Activated T-helper 1 cell treated with anti-CD3 and anti-CD28 coated beads, Interleukin-12 subunit alpha, Interleukin-12 subunit beta, Interleukin-2, Interleukin-4 antibody, amounts not matched to agents 30 ng/mL and 10 ng/mL and 1 ng/mL, durations not matched to agents 14 hours and 24 hours and 36 hours (primary cell): ENCODE measurements at regions of chr20 and their contacts with region 1.

Region 1: GRCh38 chr20:53708129-53708968 is 114.7 kb upstream of the ZNF217 start:
- DNase-seq: peak; percentile 26
- H3K4me3 Mint-ChIP-seq: peak overlapping the region; percentile 61
- H3K27ac Mint-ChIP-seq: peak overlapping the region; percentile 98
- H3K4me1 Mint-ChIP-seq: peaks cover 39% of the 10 kb centered on the region
- H3K27me3 Mint-ChIP-seq: no peaks in the 10 kb centered on the region

Region 2: GRCh38 chr20:53578492-53579222 is 129.7 kb before region 1 on chr20:
- intact Hi-C with region 1: loop called (anchors 1 kb)
- DNase-seq: peak; percentile 62
- H3K4me3 Mint-ChIP-seq: peak overlapping the region; percentile 83
- H3K27ac Mint-ChIP-seq: peak overlapping the region; percentile 88
- H3K4me1 Mint-ChIP-seq: peaks cover 85% of the 10 kb centered on the region
- H3K27me3 Mint-ChIP-seq: no peaks in the 10 kb centered on the region

Region 3: GRCh38 chr20:53652090-53652858 is 56.1 kb before region 1 on chr20:
- intact Hi-C with region 1: loop called (anchors 1 kb)
- DNase-seq: no peak
- H3K4me3 Mint-ChIP-seq: peak overlapping the region; percentile 70
- H3K27ac Mint-ChIP-seq: peak overlapping the region; percentile 97
- H3K4me1 Mint-ChIP-seq: peaks cover 41% of the 10 kb centered on the region
- H3K27me3 Mint-ChIP-seq: no peaks in the 10 kb centered on the region

Region 4: GRCh38 chr20:53718142-53719021 is 10.0 kb after region 1 on chr20:
- intact Hi-C with region 1: loop called (anchors 1 kb)
- DNase-seq: no peak
- H3K4me3 Mint-ChIP-seq: no peak overlapping the region
- H3K27ac Mint-ChIP-seq: no peak overlapping the region
- H3K4me1 Mint-ChIP-seq: peaks cover 27% of the 10 kb centered on the region
- H3K27me3 Mint-ChIP-seq: no peaks in the 10 kb centered on the region

Region 5: DNA sequence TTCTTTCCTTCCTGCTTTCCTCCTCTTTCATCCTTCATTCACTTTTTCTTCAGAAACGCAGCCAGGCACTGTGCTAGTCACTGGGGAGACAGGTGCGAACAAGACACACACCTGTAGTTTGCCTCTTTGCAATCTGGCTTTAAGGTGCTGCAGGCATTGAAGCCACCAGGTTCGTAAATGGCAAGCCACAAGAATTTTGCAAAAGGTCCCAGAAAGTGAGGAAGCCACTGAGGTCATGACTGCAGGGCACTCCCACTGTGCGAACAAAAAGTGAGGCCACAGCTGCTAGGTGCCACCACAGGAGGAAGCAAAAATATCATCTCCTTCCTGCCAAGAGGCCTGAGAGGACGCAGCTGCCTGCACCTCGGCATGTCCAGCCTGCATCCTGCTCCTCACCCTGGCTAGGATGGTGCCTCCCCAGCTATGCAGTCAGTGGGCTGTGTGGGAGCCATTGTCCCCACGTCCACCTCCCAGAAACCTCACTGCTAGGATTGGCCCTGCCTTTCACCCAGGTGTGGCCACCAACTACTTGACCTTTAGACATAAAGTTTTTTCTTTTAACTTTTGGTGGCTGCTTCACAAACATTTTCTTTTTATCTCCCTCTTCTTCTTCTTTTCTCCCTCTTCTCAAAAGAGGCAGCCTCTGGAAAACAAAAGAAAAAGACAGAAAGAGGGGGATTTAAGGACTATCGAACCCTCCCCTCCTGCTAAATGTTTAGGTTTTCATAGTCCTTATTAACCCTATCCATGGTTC is 131.3 kb after region 1 on chr20:
- intact Hi-C with region 1: loop called (anchors 1 kb)
- DNase-seq: peak; percentile 62
- H3K4me3 Mint-ChIP-seq: peak overlapping the region; percentile 80
- H3K27ac Mint-ChIP-seq: peak overlapping the region; percentile 96
- H3K4me1 Mint-ChIP-seq: peaks cover 72% of the 10 kb centered on the region
- H3K27me3 Mint-ChIP-seq: peaks cover 2% of the 10 kb centered on the region

Region 6: GRCh38 chr20:53899351-53900167 is 191.2 kb after region 1 on chr20:
- intact Hi-C with region 1: loop called (anchors 1 kb)
- DNase-seq: peak; percentile 74
- H3K4me3 Mint-ChIP-seq: peak overlapping the region; percentile 69
- H3K27ac Mint-ChIP-seq: peak overlapping the region; percentile 87
- H3K4me1 Mint-ChIP-seq: peaks cover 56% of the 10 kb centered on the region
- H3K27me3 Mint-ChIP-seq: no peaks in the 10 kb centered on the region

Region 7: GRCh38 chr20:54044156-54044555 is 335.8 kb after region 1 on chr20:
- intact Hi-C with region 1: loop called (anchors 5 kb)
- DNase-seq: no peak
- H3K4me3 Mint-ChIP-seq: no peak overlapping the region
- H3K27ac Mint-ChIP-seq: peak overlapping the region; percentile 82
- H3K4me1 Mint-ChIP-seq: peaks cover 23% of the 10 kb centered on the region
- H3K27me3 Mint-ChIP-seq: peaks cover 4% of the 10 kb centered on the region